ENCODE measurements at regions of chr5 and their contacts with region 1.

Region 1: DNA sequence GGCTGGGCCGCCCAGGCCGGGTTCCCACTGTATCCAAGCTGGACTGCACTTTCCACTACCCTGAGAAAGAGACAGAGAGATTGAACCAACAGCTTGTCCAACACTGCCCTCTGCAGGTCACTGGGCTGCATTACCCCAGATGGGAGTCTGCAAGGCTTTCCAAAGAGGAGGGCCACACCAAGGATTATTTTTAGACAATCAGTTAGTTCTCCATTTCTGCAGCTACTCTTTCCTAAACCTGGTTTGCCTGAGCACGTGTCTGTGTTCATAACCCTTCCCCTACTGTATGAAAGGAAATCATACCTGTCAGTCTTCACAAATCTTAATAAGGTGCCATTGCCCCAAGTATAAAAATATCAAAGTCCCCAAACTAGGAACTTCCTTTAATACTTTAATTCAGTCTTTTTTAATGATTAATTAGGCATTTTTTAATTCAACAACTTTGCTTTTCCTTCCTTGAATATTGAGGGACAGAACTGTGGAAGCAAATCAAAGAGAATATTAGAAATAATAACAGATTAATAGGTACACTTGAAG is 13.4 kb upstream of the FGF1 start:
- DNase-seq: peak; percentile 93
- H3K4me3 Mint-ChIP-seq: no peak overlapping the region
- H3K27ac Mint-ChIP-seq: no peak overlapping the region
- H3K4me1 Mint-ChIP-seq: peaks cover 22% of the 10 kb centered on the region
- H3K27me3 Mint-ChIP-seq: peaks cover 16% of the 10 kb centered on the region
- CTCF ChIP-seq: peak; percentile 99

Region 2: DNA sequence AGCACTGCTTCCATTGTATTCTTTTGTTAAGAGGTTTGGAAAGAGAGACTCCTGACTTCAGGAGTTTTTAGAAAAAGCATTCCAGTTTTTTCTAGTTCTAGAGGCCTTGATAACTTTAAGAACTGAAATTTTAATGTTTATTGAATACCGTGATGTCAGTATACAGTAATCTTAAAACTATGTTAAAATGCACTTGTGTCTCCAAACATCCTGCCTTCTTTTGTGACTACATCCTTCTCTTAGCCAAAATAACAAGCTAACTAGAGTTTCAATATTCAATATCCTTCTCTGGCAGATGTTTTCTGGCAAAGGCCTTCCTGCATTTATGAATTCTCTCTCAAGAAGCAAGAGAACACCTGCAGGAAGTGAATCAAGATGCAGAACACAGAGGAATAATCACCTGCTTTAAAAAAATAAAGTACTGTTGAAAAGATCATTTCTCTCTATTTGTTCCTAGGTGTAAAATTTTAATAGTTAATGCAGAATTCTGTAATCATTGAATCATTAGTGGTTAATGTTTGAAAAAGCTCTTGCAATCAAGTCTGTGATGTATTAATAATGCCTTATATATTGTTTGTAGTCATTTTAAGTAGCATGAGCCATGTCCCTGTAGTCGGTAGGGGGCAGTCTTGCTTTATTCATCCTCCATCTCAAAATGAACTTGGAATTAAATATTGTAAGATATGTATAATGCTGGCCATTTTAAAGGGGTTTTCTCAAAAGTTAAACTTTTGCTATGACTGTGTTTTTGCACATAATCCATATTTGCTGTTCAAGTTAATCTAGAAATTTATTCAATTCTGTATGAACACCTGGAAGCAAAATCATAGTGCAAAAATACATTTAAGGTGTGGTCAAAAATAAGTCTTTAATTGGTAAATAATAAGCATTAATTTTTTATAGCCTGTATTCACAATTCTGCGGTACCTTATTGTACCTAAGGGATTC is 547.5 kb before region 1 on chr5:
- CTCF ChIA-PET with region 1: no interaction called
- intact Hi-C with region 1: loop called (anchors 2 kb)
- DNase-seq: peak; percentile 78
- H3K4me3 Mint-ChIP-seq: no peak overlapping the region
- H3K27ac Mint-ChIP-seq: no peak overlapping the region
- H3K4me1 Mint-ChIP-seq: no peaks in the 10 kb centered on the region
- H3K27me3 Mint-ChIP-seq: no peaks in the 10 kb centered on the region
- CTCF ChIP-seq: peak; percentile 80

Region 3: DNA sequence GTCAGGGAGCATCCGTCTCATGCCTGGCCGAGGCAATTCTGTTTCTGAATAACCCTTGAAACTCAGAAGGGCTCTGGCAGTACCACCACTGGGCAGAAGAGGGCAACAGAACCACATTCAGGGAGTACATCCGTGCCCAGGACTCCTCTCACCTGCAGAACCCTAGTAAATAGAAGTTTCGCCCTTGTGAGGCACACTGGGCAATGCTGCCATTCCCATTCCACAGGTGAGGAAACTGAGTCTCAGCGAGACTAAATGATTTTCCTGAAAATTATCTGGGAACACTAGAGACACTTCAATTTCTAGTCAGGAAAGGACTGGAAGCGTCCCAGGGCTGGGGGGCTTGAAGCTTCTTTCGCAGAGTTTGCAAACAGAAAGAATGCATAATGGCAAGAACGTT is 88.1 kb before region 1 on chr5:
- CTCF ChIA-PET with region 1: interaction called, 15 read pairs
- intact Hi-C with region 1: loop called (anchors 1 kb)
- DNase-seq: peak; percentile 88
- H3K4me3 Mint-ChIP-seq: no peak overlapping the region
- H3K27ac Mint-ChIP-seq: no peak overlapping the region
- H3K4me1 Mint-ChIP-seq: peaks cover 16% of the 10 kb centered on the region
- H3K27me3 Mint-ChIP-seq: peaks cover 39% of the 10 kb centered on the region
- CTCF ChIP-seq: peak; percentile 94

Region 4: GRCh38 chr5:142655339-142656267 is 43.6 kb before region 1 on chr5:
- CTCF ChIA-PET with region 1: interaction called, 93 read pairs
- intact Hi-C with region 1: loop called (anchors 1 kb)
- DNase-seq: peak; percentile 90
- H3K4me3 Mint-ChIP-seq: no peak overlapping the region
- H3K27ac Mint-ChIP-seq: no peak overlapping the region
- H3K4me1 Mint-ChIP-seq: no peaks in the 10 kb centered on the region
- H3K27me3 Mint-ChIP-seq: peaks cover 38% of the 10 kb centered on the region
- CTCF ChIP-seq: peak; percentile 97

Region 5: DNA sequence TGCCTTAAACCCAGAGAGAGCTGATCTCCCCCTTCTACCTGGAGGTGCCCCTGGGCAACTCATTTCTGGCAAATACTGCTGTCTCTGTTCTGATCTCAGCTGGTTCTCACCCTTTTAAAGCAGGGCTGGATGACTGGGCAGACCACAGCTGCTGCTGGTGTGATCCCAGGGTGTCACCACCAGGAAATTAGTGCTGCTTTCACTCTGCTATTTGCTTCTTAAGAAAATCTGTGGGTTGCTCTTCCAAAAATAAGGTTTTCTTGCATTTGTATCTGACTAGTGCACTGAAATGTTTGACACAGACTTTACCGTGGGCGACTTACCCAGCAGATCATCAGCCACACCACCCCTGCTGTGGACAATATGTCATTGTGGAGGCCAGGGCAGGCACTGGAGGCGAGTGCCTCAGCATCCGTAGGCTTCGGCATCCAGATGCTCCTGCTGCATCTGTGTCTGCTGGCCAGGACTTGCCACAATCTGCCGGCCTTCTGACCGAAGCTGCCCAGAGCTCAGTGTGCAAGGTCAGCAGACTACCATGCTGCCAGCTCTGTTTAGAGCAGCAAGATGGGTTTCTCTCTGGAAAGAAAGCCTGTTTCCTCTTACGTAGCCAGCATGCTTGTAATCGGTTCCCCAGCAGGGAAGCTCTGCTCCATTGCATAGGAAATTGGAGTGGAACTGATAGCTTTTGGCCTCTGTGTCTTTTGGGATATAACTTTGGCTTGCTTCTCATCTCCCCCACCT is 84.5 kb after region 1 on chr5:
- CTCF ChIA-PET with region 1: no interaction called
- intact Hi-C with region 1: no loop called
- DNase-seq: no peak
- H3K4me3 Mint-ChIP-seq: no peak overlapping the region
- H3K27ac Mint-ChIP-seq: no peak overlapping the region
- H3K4me1 Mint-ChIP-seq: peaks cover 63% of the 10 kb centered on the region
- H3K27me3 Mint-ChIP-seq: no peaks in the 10 kb centered on the region
- CTCF ChIP-seq: no peak

Measured in Calu3 (cell line).